Tibial artery (tissue), 4 donors: ENCODE measurements at regions of chr16 and their contacts with region 1.

Region 1: GRCh38 chr16:30747799-30748634 is at the start of gene PHKG2:
- DNase-seq: peak; percentile 99 to 100
- H3K4me3 ChIP-seq: peak within 1 kb of the TSS; percentile 89 to 99
- H3K27ac ChIP-seq: peak within 1 kb of the TSS; percentile 67 to 84
- H3K4me1 ChIP-seq: peaks cover 0 to 24% (median 9%) of the 10 kb centered on the region in 4 donors
- H3K27me3 ChIP-seq: no peaks in the 10 kb centered on the region
- CTCF ChIP-seq: peak in 1 of 2 experiments; percentile 6

Region 2: DNA sequence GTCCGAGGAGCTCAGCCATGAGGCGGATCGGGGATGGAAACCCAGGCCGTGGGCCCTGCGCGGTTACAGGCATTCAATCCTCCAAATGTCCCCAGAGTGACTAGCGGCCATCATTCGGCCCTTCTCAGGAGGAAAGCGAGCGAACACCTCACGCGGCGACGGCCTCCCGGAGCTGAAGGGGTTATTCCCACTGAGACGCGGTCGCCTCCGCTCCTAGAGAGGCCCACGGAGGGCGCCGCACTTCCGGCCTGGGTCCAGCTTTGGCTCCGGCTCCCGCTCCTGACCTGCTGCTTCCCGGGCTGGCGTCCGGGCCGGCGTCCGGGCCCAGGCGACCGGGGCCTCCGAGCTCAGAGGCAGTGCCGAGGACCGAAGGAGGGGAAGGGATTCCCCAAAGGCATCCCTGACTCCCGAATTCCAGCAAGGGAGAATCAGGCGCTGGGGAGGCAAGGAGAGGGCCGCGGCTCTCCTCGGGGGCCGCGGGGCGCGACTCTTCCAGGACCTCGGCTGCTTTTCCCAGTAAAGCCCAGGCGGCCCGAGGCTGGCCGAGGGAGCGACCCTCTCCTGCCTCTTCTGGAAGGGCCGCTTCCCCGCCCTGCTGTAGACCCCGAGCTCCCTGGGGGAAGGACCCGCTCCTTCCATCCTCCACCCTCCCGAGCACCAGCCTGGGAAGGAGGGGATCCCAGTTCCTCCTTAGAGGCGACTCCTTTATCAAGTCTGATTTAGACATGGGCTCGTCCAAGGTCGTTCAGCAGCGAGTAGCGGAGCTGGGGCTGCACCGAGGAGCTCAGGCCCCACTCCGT is 57.6 kb after region 1 on chr16:
- intact Hi-C with region 1: loop called (anchors 10 kb)
- DNase-seq: peak; percentile 86 to 92
- H3K4me3 ChIP-seq: peak overlapping the region; percentile 69 to 90
- H3K27ac ChIP-seq: peak overlapping the region; percentile 92 to 93
- H3K4me1 ChIP-seq: peaks cover 0 to 22% (median 10%) of the 10 kb centered on the region in 4 donors
- H3K27me3 ChIP-seq: no peaks in the 10 kb centered on the region
- CTCF ChIP-seq: no peak